Mammary epithelial cell (primary cell): ENCODE measurements at regions of chr5 and their contacts with region 1.

Region 1: GRCh38 chr5:96288166-96288844 is 144.7 kb downstream of the PCSK1 start:
- DNase-seq: no peak
- H3K4me3 ChIP-seq: no peak overlapping the region
- H3K27ac ChIP-seq: peak overlapping the region; percentile 19
- H3K4me1 ChIP-seq: peaks cover 12% of the 10 kb centered on the region
- H3K27me3 ChIP-seq: no peaks in the 10 kb centered on the region
- CTCF ChIP-seq: no peak

Region 2: DNA sequence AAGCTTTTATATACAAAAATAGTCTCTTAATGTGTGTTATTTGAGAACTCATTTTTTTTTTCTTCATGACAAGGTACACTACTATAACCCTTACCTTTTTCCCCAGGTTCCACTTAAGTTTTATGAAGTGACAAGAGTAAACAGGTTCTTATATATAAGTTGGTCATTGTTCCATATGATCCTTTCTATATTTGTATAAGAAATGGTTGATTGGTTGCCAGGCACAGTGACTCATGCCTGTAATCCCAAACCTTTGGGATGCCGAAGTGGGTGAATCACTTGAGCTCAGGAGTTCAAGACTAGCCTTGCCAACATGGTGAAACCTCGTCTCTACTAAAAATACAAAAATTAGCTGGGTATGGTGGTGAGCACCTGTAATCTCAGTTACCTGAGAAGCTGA is 36.4 kb after region 1 on chr5:
- CTCF ChIA-PET with region 1: no interaction called
- dilution Hi-C with region 1: no loop called
- in situ Hi-C with region 1: no loop called
- intact Hi-C with region 1: loop called (anchors 2 kb)
- DNase-seq: peak; percentile 87
- H3K4me3 ChIP-seq: no peak overlapping the region
- H3K27ac ChIP-seq: peak overlapping the region; percentile 66
- H3K4me1 ChIP-seq: peaks cover 26% of the 10 kb centered on the region
- H3K27me3 ChIP-seq: no peaks in the 10 kb centered on the region
- CTCF ChIP-seq: no peak